Psoas muscle (tissue), 8 donors: ENCODE measurements at regions of chr2 and their contacts with region 1.

Region 1: DNA sequence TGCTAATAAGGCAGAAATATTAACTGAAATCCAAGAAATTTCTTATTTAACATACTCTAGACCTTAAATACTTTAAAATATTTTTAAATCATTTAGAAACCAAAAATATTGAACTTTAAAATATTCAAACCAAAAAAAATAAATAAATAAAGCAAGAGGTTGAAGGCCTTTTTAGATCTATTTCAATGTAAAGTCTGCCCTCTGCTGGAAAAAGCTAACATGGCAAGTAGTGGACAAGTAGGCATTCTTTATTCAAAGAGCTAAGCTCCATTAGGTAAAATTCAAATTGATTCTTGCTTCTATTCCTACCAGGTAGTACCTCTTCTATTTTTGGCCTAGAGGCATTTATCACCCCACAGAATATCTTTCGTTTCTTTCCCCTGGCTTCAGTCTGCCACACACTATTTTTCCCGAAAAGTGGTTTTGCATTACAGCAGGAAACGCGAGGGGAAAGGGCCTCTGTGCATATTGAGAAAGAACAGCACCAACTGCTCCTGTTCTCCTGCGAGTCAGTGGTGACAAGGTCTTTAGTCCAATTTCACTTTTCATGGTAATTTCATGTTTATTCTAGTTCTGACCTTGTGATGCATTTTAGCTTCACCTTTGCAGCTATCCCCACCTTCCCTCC is 20.4 kb downstream of the IFIH1 start:
- DNase-seq: no peak
- ATAC-seq: peak in 2 of 4 donors; percentile 59 to 77
- H3K4me3 ChIP-seq: no peak overlapping the region
- H3K27ac ChIP-seq: no peak overlapping the region
- H3K4me1 ChIP-seq: peaks cover 8% of the 10 kb centered on the region
- H3K27me3 ChIP-seq: no peaks in the 10 kb centered on the region
- CTCF ChIP-seq: peak; percentile 83

Region 2: GRCh38 chr2:162155096-162155495 is 142.9 kb before region 1 on chr2:
- intact Hi-C with region 1: loop called in 1 of 2 experiments (anchors 5 kb)
- DNase-seq: no peak
- ATAC-seq: no peak
- H3K4me3 ChIP-seq: no peak overlapping the region
- H3K27ac ChIP-seq: no peak overlapping the region
- H3K4me1 ChIP-seq: no peaks in the 10 kb centered on the region
- H3K27me3 ChIP-seq: no peaks in the 10 kb centered on the region
- CTCF ChIP-seq: no peak

Region 3: GRCh38 chr2:162221064-162221463 is 77.0 kb before region 1 on chr2:
- intact Hi-C with region 1: loop called (anchors 2 kb)
- DNase-seq: peak; percentile 65 to 74
- ATAC-seq: peak; percentile 53 to 82 (median 60)
- H3K4me3 ChIP-seq: no peak overlapping the region
- H3K27ac ChIP-seq: no peak overlapping the region
- H3K4me1 ChIP-seq: no peaks in the 10 kb centered on the region
- H3K27me3 ChIP-seq: no peaks in the 10 kb centered on the region
- CTCF ChIP-seq: peak; percentile 78